Mammary epithelial cell (primary cell): ENCODE measurements at regions of chr2 and their contacts with region 1.

Region 1: DNA sequence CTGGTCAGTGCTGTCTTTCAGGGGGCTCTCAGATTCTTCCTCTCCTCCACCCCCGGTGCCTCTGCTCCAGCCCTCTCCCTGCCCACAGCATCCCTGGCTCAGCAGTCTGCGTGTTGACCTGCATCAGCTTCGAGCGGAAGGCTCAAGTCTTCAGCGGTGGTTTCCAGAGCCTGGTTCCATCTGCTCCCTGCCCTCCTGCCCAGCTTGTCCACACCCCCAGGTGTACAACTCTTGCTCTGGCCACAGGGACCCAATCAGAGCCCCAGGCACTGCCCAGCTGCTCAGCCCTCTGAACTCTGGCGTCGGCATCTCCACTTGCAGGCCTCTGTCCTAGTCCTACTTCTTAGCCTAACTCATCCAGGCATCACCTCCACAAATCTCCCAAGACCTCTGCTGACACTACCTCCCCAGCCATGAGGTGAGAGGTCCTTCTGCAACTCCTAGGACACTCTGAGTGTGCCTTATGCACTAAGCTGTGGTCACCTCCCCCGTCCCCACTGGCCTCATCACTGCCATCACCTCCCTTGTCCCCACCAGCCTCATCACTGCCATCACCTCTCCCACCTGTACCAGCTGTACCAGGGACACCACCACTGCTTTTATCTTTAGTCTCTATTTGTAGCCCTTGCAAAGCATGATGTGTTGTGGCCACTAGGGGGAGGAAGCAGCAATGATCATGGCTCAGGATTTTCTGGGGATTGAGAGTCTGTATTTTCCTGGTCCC is 60.9 kb downstream of the EDAR start:
- DNase-seq: peak; percentile 45
- H3K4me3 ChIP-seq: no peak overlapping the region
- H3K27ac ChIP-seq: no peak overlapping the region
- H3K4me1 ChIP-seq: peaks cover 20% of the 10 kb centered on the region
- H3K27me3 ChIP-seq: peaks cover 11% of the 10 kb centered on the region
- CTCF ChIP-seq: peak; percentile 84 to 93

Region 2: GRCh38 chr2:108968619-108969018 is 40.5 kb after region 1 on chr2:
- CTCF ChIA-PET with region 1: no interaction called
- dilution Hi-C with region 1: no loop called
- in situ Hi-C with region 1: no loop called
- intact Hi-C with region 1: loop called (anchors 5 kb)
- DNase-seq: peak; percentile 57
- H3K4me3 ChIP-seq: no peak overlapping the region
- H3K27ac ChIP-seq: no peak overlapping the region
- H3K4me1 ChIP-seq: peaks cover 21% of the 10 kb centered on the region
- H3K27me3 ChIP-seq: no peaks in the 10 kb centered on the region
- CTCF ChIP-seq: no peak